Activated CD8-positive, alpha-beta T cell treated with anti-CD3 and anti-CD28 coated beads for 36 hours (primary cell): ENCODE measurements at regions of chr14 and their contacts with region 1.

Region 1: GRCh38 chr14:61837336-61838229 is 75.4 kb downstream of the SNAPC1 start:
- DNase-seq: peak; percentile 87
- ATAC-seq: peak; percentile 99
- H3K4me3 Mint-ChIP-seq: no peak overlapping the region
- H3K27ac Mint-ChIP-seq: no peak overlapping the region
- H3K4me1 Mint-ChIP-seq: peaks cover 4% of the 10 kb centered on the region
- H3K27me3 Mint-ChIP-seq: peaks cover 3% of the 10 kb centered on the region
- CTCF ChIP-seq: peak; percentile 98

Region 2: GRCh38 chr14:61269321-61270083 is 568.1 kb before region 1 on chr14:
- CTCF ChIA-PET with region 1: interaction called, 26 read pairs
- POLR2A ChIA-PET with region 1: no interaction called
- intact Hi-C with region 1: loop called (anchors 5 kb)
- DNase-seq: peak; percentile 94
- ATAC-seq: peak; percentile 99
- H3K4me3 Mint-ChIP-seq: peak overlapping the region; percentile 68
- H3K27ac Mint-ChIP-seq: no peak overlapping the region
- H3K4me1 Mint-ChIP-seq: no peaks in the 10 kb centered on the region
- H3K27me3 Mint-ChIP-seq: peaks cover 28% of the 10 kb centered on the region
- CTCF ChIP-seq: peak; percentile 81

Region 3: DNA sequence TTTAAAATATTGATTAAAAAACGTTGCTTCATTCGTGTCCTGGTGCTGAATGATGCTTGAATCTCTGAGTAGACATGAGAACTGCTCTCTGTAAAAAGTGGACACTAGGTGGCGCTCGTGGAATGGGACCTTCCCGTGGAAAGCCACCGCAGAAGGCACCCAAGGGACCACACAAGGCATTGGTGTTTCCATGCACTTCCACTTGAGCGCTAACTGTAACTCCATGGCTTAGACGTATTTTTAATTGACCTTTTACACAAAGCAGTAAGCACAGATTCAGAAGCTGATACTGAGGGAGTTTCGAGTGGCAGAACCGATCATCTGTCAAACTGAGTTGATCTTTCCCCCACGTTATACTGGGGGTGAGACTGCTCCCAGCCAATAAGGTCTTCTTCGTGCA is 380.9 kb before region 1 on chr14:
- CTCF ChIA-PET with region 1: interaction called, 62 read pairs
- POLR2A ChIA-PET with region 1: interaction called, 5 read pairs
- intact Hi-C with region 1: loop called (anchors 2 kb)
- DNase-seq: peak; percentile 92
- ATAC-seq: no peak
- H3K4me3 Mint-ChIP-seq: no peak overlapping the region
- H3K27ac Mint-ChIP-seq: peak overlapping the region; percentile 84
- H3K4me1 Mint-ChIP-seq: peaks cover 82% of the 10 kb centered on the region
- H3K27me3 Mint-ChIP-seq: no peaks in the 10 kb centered on the region
- CTCF ChIP-seq: peak; percentile 92

Region 4: DNA sequence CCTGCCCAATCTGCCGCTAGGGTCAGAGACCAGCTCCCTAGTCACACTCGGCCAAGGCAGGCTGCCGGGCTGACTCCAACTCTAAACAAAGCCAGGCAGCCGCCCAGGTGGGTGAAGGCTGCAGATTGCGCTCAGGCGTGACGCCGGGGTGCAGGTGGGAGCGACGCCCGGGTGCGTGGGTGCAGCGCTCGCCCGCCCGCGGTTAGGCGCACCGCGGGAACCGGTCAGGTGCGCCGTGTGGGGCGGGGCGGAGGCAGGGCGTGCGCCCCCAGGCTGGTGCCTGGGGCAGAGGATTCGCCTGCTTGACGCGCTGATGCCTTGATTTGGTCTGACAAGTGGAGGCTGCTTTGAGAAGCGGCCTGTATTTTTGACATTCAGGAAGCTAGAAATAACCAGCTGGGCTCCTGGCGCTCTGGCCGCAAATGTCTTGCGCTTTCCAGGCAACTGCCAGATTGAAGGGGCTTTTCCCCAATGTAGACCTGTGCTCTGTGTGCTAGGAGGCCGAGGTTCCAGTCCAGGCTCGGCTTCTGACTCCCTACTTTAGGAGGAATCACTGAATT is 268.9 kb before region 1 on chr14:
- CTCF ChIA-PET with region 1: interaction called, 6 read pairs
- POLR2A ChIA-PET with region 1: no interaction called
- intact Hi-C with region 1: loop called (anchors 10 kb)
- DNase-seq: peak; percentile 72
- ATAC-seq: peak; percentile 56
- H3K4me3 Mint-ChIP-seq: peak overlapping the region; percentile 52
- H3K27ac Mint-ChIP-seq: peak overlapping the region; percentile 78
- H3K4me1 Mint-ChIP-seq: peaks cover 69% of the 10 kb centered on the region
- H3K27me3 Mint-ChIP-seq: no peaks in the 10 kb centered on the region
- CTCF ChIP-seq: no peak

Region 5: GRCh38 chr14:61761959-61762786 is 75.4 kb before region 1 on chr14 and contains the start of gene SNAPC1:
- CTCF ChIA-PET with region 1: interaction called, 24 read pairs
- POLR2A ChIA-PET with region 1: no interaction called
- intact Hi-C with region 1: no loop called
- DNase-seq: peak; percentile 99
- ATAC-seq: peak; percentile 99
- H3K4me3 Mint-ChIP-seq: peak within 1 kb of the TSS; percentile 92
- H3K27ac Mint-ChIP-seq: peak within 1 kb of the TSS; percentile 93
- H3K4me1 Mint-ChIP-seq: peaks cover 39% of the 10 kb centered on the region
- H3K27me3 Mint-ChIP-seq: no peaks in the 10 kb centered on the region
- CTCF ChIP-seq: no peak
- total RNA-seq, gene SNAPC1: 11.4 to 11.6 TPM

Region 6: DNA sequence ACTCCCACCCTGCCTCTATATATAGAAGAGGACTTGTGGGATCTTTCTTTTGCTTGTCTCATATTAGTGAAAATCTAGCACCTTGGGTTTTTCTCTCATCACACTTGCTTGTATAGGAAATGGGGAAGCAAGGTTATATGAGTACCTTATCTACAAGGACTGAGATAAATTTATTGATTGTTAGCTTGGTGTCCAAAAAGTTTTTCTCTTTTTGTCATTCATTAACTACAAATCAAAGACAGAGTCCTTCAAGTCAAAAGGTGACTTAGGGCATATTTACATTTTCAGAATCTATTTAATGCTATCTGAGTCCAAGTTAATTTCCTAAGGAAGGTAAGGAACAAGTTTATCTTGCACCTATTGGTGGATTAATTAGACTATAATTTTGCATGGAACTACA is 17.3 kb after region 1 on chr14:
- CTCF ChIA-PET with region 1: interaction called, 17 read pairs
- POLR2A ChIA-PET with region 1: no interaction called
- intact Hi-C with region 1: no loop called
- DNase-seq: no peak
- ATAC-seq: no peak
- H3K4me3 Mint-ChIP-seq: no peak overlapping the region
- H3K27ac Mint-ChIP-seq: no peak overlapping the region
- H3K4me1 Mint-ChIP-seq: no peaks in the 10 kb centered on the region
- H3K27me3 Mint-ChIP-seq: peaks cover 22% of the 10 kb centered on the region
- CTCF ChIP-seq: no peak

Region 7: DNA sequence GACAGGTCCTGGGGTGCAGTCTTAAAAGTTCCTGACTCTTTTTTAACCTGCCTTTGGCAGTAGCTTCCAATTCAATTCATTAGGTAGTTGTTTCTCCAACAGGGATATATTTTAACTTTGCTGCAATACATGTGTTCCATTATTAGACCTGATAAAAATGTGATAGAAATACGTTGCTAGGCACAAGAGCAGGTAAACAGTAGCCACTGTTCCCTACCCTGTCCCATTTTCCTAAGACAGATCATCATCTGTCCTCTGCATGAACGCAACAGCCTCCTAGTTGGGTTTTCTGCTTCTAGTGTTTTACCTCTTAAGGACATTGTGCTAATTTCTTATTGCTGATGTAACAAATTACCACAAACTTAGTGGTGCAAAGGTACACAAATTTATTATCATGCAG is 81.4 kb after region 1 on chr14:
- CTCF ChIA-PET with region 1: no interaction called
- POLR2A ChIA-PET with region 1: no interaction called
- intact Hi-C with region 1: no loop called
- DNase-seq: no peak
- ATAC-seq: no peak
- H3K4me3 Mint-ChIP-seq: no peak overlapping the region
- H3K27ac Mint-ChIP-seq: no peak overlapping the region
- H3K4me1 Mint-ChIP-seq: no peaks in the 10 kb centered on the region
- H3K27me3 Mint-ChIP-seq: peaks cover 15% of the 10 kb centered on the region
- CTCF ChIP-seq: no peak

Region 8: GRCh38 chr14:61950340-61950739 is 112.8 kb after region 1 on chr14:
- CTCF ChIA-PET with region 1: no interaction called
- POLR2A ChIA-PET with region 1: no interaction called
- intact Hi-C with region 1: no loop called
- DNase-seq: no peak
- ATAC-seq: no peak
- H3K4me3 Mint-ChIP-seq: no peak overlapping the region
- H3K27ac Mint-ChIP-seq: no peak overlapping the region
- H3K4me1 Mint-ChIP-seq: no peaks in the 10 kb centered on the region
- H3K27me3 Mint-ChIP-seq: peaks cover 6% of the 10 kb centered on the region
- CTCF ChIP-seq: no peak

Region 9: GRCh38 chr14:62110941-62111340 is 273.4 kb after region 1 on chr14:
- CTCF ChIA-PET with region 1: no interaction called
- POLR2A ChIA-PET with region 1: no interaction called
- intact Hi-C with region 1: no loop called
- DNase-seq: no peak
- ATAC-seq: no peak
- H3K4me3 Mint-ChIP-seq: no peak overlapping the region
- H3K27ac Mint-ChIP-seq: no peak overlapping the region
- H3K4me1 Mint-ChIP-seq: peaks cover 2% of the 10 kb centered on the region
- H3K27me3 Mint-ChIP-seq: peaks cover 24% of the 10 kb centered on the region
- CTCF ChIP-seq: no peak